ENCODE measurements at regions of chr7 and their contacts with region 1.

Region 1: DNA sequence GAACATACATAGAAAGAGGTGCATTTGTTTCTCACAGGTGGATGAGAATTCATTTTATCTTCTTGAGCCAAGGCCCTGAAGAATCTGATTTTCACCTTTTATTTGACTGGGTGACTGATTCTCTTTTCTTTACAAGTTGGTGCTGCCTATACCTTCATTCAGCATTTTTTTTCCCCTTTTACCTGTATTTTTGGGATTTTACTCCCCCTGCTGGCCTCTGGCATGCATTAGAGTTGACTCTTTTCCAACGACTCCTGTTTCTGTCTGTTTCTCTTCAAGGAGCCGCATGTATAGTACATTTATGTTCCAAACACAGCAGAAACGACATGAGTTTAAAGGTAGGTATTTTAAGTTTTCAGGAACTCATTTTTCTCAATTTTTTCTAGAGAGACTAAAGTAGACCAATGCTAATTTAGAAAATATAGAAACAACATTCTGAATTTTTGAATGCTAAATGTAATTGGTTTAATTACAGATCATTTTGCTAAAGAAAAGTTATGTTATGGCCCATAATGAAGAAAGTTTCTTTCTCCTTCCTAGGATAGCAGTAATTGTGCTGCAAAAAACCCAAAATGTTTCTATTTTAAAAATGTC is 149.8 kb upstream of the HDAC9 start:
- DNase-seq: no peak
- H3K4me3 ChIP-seq: no peak overlapping the region
- H3K27ac ChIP-seq: no peak overlapping the region
- H3K4me1 ChIP-seq: peaks cover 0 to 7% (median 2%) of the 10 kb centered on the region in 4 donors
- H3K27me3 ChIP-seq: no peaks in the 10 kb centered on the region
- CTCF ChIP-seq: peak; percentile 49 to 70 (median 70)
- EP300 ChIP-seq: no peak
- POLR2A ChIP-seq: no peak

Region 2: DNA sequence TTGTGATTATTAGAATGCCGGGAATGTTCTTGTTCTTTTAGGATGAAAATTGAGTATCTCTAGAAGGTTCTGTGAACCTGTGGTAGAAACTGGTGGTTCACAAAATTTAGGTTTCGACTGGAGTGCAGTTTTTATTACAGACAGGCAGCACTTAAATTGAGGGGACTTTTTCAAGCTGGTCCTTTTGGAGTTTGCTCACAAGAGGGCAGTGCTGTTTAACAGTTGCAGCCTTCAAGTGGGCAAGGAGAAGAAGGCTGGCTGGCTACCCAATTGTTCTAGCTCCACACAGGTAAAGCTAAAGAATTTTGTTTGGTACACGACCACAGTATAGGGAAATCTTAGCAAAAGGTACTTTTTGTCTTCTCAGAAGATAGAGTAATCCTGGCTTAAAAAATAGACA is 639.0 kb before region 1 on chr7:
- intact Hi-C with region 1: loop called (anchors 10 kb)
- DNase-seq: peak; percentile 65
- H3K4me3 ChIP-seq: no peak overlapping the region
- H3K27ac ChIP-seq: no peak overlapping the region
- H3K4me1 ChIP-seq: no peaks in the 10 kb centered on the region
- H3K27me3 ChIP-seq: no peaks in the 10 kb centered on the region
- CTCF ChIP-seq: peak in 2 of 4 experiments; percentile 16 to 45
- EP300 ChIP-seq: no peak
- POLR2A ChIP-seq: no peak

Region 3: GRCh38 chr7:17971411-17971810 is 374.3 kb before region 1 on chr7:
- intact Hi-C with region 1: loop called (anchors 10 kb)
- DNase-seq: no peak
- H3K4me3 ChIP-seq: no peak overlapping the region
- H3K27ac ChIP-seq: no peak overlapping the region
- H3K4me1 ChIP-seq: no peaks in the 10 kb centered on the region
- H3K27me3 ChIP-seq: no peaks in the 10 kb centered on the region
- CTCF ChIP-seq: no peak
- EP300 ChIP-seq: no peak
- POLR2A ChIP-seq: no peak

Region 4: GRCh38 chr7:18086165-18087030 is 259.3 kb before region 1 on chr7:
- intact Hi-C with region 1: loop called (anchors 10 kb)
- DNase-seq: peak; percentile 70
- H3K4me3 ChIP-seq: peak overlapping the region; percentile 69 to 95 (median 83)
- H3K27ac ChIP-seq: peak overlapping the region; percentile 66 to 87 (median 74)
- H3K4me1 ChIP-seq: peaks cover 0 to 16% (median 8%) of the 10 kb centered on the region in 4 donors
- H3K27me3 ChIP-seq: no peaks in the 10 kb centered on the region
- CTCF ChIP-seq: peak in 1 of 4 experiments; percentile 40
- EP300 ChIP-seq: no peak
- POLR2A ChIP-seq: no peak

Region 5: GRCh38 chr7:18437101-18437500 is 91.4 kb after region 1 on chr7:
- intact Hi-C with region 1: no loop called
- DNase-seq: no peak
- H3K4me3 ChIP-seq: no peak overlapping the region
- H3K27ac ChIP-seq: no peak overlapping the region
- H3K4me1 ChIP-seq: no peaks in the 10 kb centered on the region
- H3K27me3 ChIP-seq: no peaks in the 10 kb centered on the region
- CTCF ChIP-seq: no peak
- EP300 ChIP-seq: no peak
- POLR2A ChIP-seq: no peak

Measured in sigmoid colon (tissue), 7 donors.